OCI-LY7 (cell line): ENCODE measurements at regions of chr2 and their contacts with region 1.

Region 1: GRCh38 chr2:70086838-70087701 is at the start of gene PCBP1:
- DNase-seq: peak; percentile 95
- H3K4me3 ChIP-seq: peak within 1 kb of the TSS; percentile 98
- H3K27ac ChIP-seq: peak within 1 kb of the TSS; percentile 94
- H3K4me1 ChIP-seq: peaks cover 61% of the 10 kb centered on the region
- CTCF ChIP-seq: no peak
- total RNA-seq, gene PCBP1: 54.8 and 58.2 TPM in 2 replicates

Region 2: GRCh38 chr2:69914170-69914960 is 172.7 kb before region 1 on chr2:
- CTCF ChIA-PET with region 1: interaction called, 4 read pairs
- POLR2A ChIA-PET with region 1: interaction called, 15 read pairs
- intact Hi-C with region 1: loop called (anchors 1 kb)
- DNase-seq: peak; percentile 100
- H3K4me3 ChIP-seq: peak overlapping the region; percentile 91
- H3K27ac ChIP-seq: peak overlapping the region; percentile 58
- H3K4me1 ChIP-seq: peaks cover 40% of the 10 kb centered on the region
- CTCF ChIP-seq: peak; percentile 50; the same call in 1 of the 2 replicates

Region 3: GRCh38 chr2:70104231-70105111 is 17.4 kb after region 1 on chr2:
- CTCF ChIA-PET with region 1: interaction called, 3 read pairs
- POLR2A ChIA-PET with region 1: interaction called, 16 read pairs
- intact Hi-C with region 1: no loop called
- DNase-seq: peak; percentile 83
- H3K4me3 ChIP-seq: peak overlapping the region; percentile 61
- H3K27ac ChIP-seq: peak overlapping the region; percentile 88
- H3K4me1 ChIP-seq: peaks cover 64% of the 10 kb centered on the region
- CTCF ChIP-seq: no peak

Region 4: DNA sequence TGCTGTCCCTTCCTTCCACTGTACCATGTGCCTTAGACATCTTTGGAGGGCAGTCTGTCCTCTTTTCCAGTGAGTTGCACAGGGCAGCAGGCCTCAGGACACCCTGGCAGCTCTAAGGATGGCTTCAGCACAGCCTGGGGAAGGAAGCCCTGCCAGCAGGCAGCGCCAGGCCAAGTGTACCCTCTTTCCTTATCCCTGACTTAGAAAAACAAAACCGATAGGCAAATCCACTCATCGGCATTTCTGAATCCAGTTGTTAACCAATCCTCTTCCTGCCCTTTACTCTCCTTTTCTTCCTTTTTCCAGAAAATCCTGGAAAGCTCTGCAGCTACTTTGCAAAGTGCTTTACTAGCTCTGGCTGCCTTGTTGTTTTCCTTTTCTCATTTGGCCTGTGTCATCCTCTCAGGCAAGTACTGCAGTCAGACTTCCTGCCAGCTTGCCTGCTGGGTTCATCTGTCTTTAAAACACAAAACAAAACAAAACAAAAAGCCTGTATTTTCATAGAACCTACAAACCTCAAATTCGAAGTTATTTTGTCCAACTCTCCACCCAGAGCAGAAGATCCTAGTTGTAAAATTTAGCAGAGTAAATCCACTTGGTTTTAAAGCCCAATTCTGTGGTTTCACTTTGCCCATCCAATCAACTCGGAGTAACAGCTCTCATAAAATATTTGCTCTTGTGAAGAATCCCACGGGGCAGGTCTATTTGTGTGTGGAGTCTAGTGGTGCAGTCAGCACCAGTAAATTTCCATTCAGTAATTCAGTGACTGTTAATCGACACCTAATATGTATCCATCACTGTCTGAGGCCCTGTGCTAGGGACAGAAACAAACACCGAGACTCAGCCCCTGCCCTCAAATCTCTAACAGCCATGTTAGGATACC is 45.4 kb after region 1 on chr2:
- CTCF ChIA-PET with region 1: interaction called, 3 read pairs
- POLR2A ChIA-PET with region 1: interaction called, 40 read pairs
- intact Hi-C with region 1: loop called (anchors 2 kb)
- DNase-seq: peak; percentile 73
- H3K4me3 ChIP-seq: peak overlapping the region; percentile 67
- H3K27ac ChIP-seq: peak overlapping the region; percentile 93
- H3K4me1 ChIP-seq: peaks cover 80% of the 10 kb centered on the region
- CTCF ChIP-seq: 0 out of 2 replicates have a peak, but pooled peaks have one; percentile 22

Region 5: GRCh38 chr2:70190418-70191243 is 103.6 kb after region 1 on chr2 and contains the start of gene C2orf42:
- CTCF ChIA-PET with region 1: no interaction called
- POLR2A ChIA-PET with region 1: interaction called, 6 read pairs
- intact Hi-C with region 1: loop called (anchors 1 kb)
- DNase-seq: peak; percentile 99
- H3K4me3 ChIP-seq: peak within 1 kb of the TSS; percentile 83
- H3K27ac ChIP-seq: peak within 1 kb of the TSS; percentile 89
- H3K4me1 ChIP-seq: peaks cover 8% of the 10 kb centered on the region
- CTCF ChIP-seq: no peak; the same call in 1 of the 2 replicates
- total RNA-seq, gene C2orf42: 24.5 and 26.8 TPM in 2 replicates

Region 6: DNA sequence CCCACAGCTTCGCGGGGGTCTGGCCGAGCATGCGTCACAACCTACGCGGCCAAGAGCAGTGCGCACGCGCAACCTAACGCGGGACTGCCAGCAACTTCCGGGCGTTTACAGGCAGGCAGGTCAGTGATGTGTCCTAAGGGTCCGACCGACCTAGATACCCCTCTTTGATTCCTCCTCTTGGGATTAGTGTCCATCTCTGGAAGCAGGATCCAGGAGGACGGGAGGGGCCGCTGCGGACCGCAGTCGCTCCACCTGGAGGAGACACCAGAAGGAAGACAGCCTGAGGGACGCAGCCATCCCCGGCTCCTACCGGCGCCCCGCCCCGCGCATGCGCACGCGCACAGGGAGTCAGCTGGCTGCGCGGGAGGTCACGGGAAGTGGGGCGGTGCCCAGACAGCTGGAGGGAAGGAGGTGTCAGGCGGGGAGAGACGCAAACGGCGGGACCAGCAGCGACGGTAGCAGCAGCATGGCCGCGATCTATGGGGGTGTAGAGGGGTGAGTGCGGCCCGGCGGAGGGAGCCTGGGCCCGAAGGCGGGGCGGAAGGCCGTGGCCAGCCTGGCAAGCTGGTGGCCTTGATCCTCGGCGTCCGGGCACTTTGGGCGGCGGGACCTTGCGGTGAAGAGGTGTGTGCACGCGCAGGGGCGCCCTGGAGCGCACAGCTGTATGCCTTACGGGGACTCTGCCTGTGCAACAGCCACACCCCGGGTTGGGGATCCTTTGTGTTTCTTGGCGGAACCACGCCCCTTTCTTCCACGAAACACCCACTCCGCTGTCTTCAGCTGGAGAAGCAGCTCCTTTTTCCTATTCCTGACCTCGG is 981.4 kb after region 1 on chr2 and contains the start of gene NAGK:
- CTCF ChIA-PET with region 1: no interaction called
- POLR2A ChIA-PET with region 1: no interaction called
- intact Hi-C with region 1: loop called (anchors 5 kb)
- DNase-seq: peak; percentile 96
- H3K4me3 ChIP-seq: peak within 1 kb of the TSS; percentile 94
- H3K27ac ChIP-seq: peak within 1 kb of the TSS; percentile 99
- H3K4me1 ChIP-seq: peaks cover 80% of the 10 kb centered on the region
- CTCF ChIP-seq: peak; percentile 33; the same call in 1 of the 2 replicates
- total RNA-seq, gene NAGK: 79.7 and 97.8 TPM in 2 replicates